ENCODE measurements at regions of chr1 and their contacts with region 1.

Region 1: GRCh38 chr1:43227143-43227764 is 42.5 kb upstream of the TMEM125 start:
- DNase-seq: peak; percentile 50 to 74 (median 69)
- H3K4me3 ChIP-seq: no peak overlapping the region
- H3K4me3 Mint-ChIP-seq: no peak overlapping the region
- H3K27ac ChIP-seq: no peak overlapping the region
- H3K27ac Mint-ChIP-seq: peak overlapping the region in 1 of 7 donors; percentile 36
- H3K4me1 ChIP-seq: no peaks in the 10 kb centered on the region
- H3K4me1 Mint-ChIP-seq: peaks cover 7% of the 10 kb centered on the region
- H3K27me3 ChIP-seq: no peaks in the 10 kb centered on the region
- H3K27me3 Mint-ChIP-seq: peaks cover 0 to 1% (median 1%) of the 10 kb centered on the region in 3 donors
- CTCF ChIP-seq: peak; percentile 94

Region 2: GRCh38 chr1:43285269-43285990 is 58.2 kb after region 1 on chr1 and contains the start of gene C1orf210:
- intact Hi-C with region 1: no loop called
- DNase-seq: no peak
- H3K4me3 ChIP-seq: no peak within 1 kb of the TSS
- H3K4me3 Mint-ChIP-seq: no peak within 1 kb of the TSS
- H3K27ac ChIP-seq: no peak within 1 kb of the TSS
- H3K27ac Mint-ChIP-seq: no peak within 1 kb of the TSS
- H3K4me1 ChIP-seq: no peaks in the 10 kb centered on the region
- H3K4me1 Mint-ChIP-seq: peaks cover 2% of the 10 kb centered on the region
- H3K27me3 ChIP-seq: no peaks in the 10 kb centered on the region
- H3K27me3 Mint-ChIP-seq: peaks cover 2 to 4% (median 4%) of the 10 kb centered on the region in 3 donors
- CTCF ChIP-seq: no peak
- polyA plus RNA-seq, gene C1orf210: 0.05 TPM in 1 of 3 donors, not detected in the others

Region 3: DNA sequence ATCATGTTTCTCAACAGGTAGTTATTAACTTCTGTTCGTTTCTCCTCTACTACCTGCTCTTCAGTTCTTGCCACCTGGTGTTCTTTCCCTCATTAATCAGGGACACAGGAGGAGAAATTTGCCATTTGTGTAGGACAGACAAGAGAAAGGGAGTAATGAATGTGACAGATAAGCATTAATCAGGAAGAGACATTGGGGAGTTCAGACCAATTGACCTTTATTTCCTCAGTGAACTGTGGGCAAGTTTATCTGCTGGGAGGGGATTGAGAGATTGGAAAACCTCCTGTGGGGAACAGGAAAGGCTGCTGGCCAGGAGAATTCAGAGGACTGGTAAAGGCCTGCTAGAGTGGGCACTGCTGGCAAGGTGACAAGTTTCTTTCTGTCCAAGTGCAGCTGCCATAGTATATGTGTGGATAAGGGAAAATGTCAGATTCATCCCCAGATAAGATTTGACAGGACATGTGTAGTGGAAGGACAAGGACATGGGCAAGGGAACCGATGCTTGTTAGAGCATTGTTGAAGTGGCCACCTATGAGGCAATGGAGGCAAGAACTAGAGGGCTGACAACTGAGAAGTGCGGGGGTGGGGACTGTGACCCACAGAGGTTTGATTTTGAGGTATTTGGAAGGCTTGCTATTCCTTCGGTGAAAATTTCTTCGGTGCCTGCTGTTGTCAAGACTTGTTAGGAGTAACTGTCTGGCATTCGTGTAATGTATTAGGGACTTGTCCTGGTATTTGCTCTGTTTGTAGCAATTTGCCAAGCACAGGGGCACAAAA is 175.0 kb after region 1 on chr1:
- intact Hi-C with region 1: no loop called
- DNase-seq: no peak
- H3K4me3 ChIP-seq: no peak overlapping the region
- H3K4me3 Mint-ChIP-seq: no peak overlapping the region
- H3K27ac ChIP-seq: no peak overlapping the region
- H3K27ac Mint-ChIP-seq: peak overlapping the region in 4 of 7 donors; percentile 2 to 51 (median 12)
- H3K4me1 ChIP-seq: no peaks in the 10 kb centered on the region
- H3K4me1 Mint-ChIP-seq: peaks cover 6% of the 10 kb centered on the region
- H3K27me3 ChIP-seq: no peaks in the 10 kb centered on the region
- H3K27me3 Mint-ChIP-seq: peaks cover 0 to 1% (median 0%) of the 10 kb centered on the region in 3 donors
- CTCF ChIP-seq: no peak

Region 4: GRCh38 chr1:43414634-43415223 is 187.5 kb after region 1 on chr1:
- intact Hi-C with region 1: loop called (anchors 1 to 2 kb)
- DNase-seq: peak; percentile 48 to 72 (median 71)
- H3K4me3 ChIP-seq: no peak overlapping the region
- H3K4me3 Mint-ChIP-seq: no peak overlapping the region
- H3K27ac ChIP-seq: no peak overlapping the region
- H3K27ac Mint-ChIP-seq: peak overlapping the region in 3 of 7 donors; percentile 35 to 70 (median 58)
- H3K4me1 ChIP-seq: no peaks in the 10 kb centered on the region
- H3K4me1 Mint-ChIP-seq: no peaks in the 10 kb centered on the region
- H3K27me3 ChIP-seq: no peaks in the 10 kb centered on the region
- H3K27me3 Mint-ChIP-seq: no peaks in the 10 kb centered on the region
- CTCF ChIP-seq: peak; percentile 77

Measured in CD14-positive monocyte (primary cell).